Common myeloid progenitor, CD34-positive (primary cell): ENCODE measurements at regions of chr3 and their contacts with region 1.

Region 1: GRCh38 chr3:58532794-58533220 is 4.2 kb downstream of the ACOX2 start:
- DNase-seq: peak; percentile 76 to 84 (median 82)
- H3K4me3 ChIP-seq: no peak overlapping the region
- H3K27ac ChIP-seq: no peak overlapping the region
- H3K4me1 ChIP-seq: peaks cover 0 to 49% (median 42%) of the 10 kb centered on the region in 4 experiments
- H3K27me3 ChIP-seq: no peaks in the 10 kb centered on the region

Region 2: GRCh38 chr3:58305882-58306711 is 226.7 kb before region 1 on chr3 and contains the starts of genes HTD2 and RPP14:
- CTCF ChIA-PET with region 1: interaction called, 14 read pairs
- POLR2A ChIA-PET with region 1: interaction called, 3 read pairs
- DNase-seq: peak; percentile 98 to 100 (median 99)
- H3K4me3 ChIP-seq: peak within 1 kb of the TSS; percentile 66 to 97 (median 92)
- H3K27ac ChIP-seq: peak within 1 kb of the TSS; percentile 98 to 99
- H3K4me1 ChIP-seq: peaks cover 3 to 22% (median 19%) of the 10 kb centered on the region in 4 experiments
- H3K27me3 ChIP-seq: peaks cover 0 to 4% (median 0%) of the 10 kb centered on the region in 5 experiments

Region 3: GRCh38 chr3:58398669-58399333 is 134.0 kb before region 1 on chr3:
- CTCF ChIA-PET with region 1: no interaction called
- POLR2A ChIA-PET with region 1: no interaction called
- DNase-seq: no peak
- H3K4me3 ChIP-seq: no peak overlapping the region
- H3K27ac ChIP-seq: no peak overlapping the region
- H3K4me1 ChIP-seq: no peaks in the 10 kb centered on the region
- H3K27me3 ChIP-seq: no peaks in the 10 kb centered on the region

Region 4: DNA sequence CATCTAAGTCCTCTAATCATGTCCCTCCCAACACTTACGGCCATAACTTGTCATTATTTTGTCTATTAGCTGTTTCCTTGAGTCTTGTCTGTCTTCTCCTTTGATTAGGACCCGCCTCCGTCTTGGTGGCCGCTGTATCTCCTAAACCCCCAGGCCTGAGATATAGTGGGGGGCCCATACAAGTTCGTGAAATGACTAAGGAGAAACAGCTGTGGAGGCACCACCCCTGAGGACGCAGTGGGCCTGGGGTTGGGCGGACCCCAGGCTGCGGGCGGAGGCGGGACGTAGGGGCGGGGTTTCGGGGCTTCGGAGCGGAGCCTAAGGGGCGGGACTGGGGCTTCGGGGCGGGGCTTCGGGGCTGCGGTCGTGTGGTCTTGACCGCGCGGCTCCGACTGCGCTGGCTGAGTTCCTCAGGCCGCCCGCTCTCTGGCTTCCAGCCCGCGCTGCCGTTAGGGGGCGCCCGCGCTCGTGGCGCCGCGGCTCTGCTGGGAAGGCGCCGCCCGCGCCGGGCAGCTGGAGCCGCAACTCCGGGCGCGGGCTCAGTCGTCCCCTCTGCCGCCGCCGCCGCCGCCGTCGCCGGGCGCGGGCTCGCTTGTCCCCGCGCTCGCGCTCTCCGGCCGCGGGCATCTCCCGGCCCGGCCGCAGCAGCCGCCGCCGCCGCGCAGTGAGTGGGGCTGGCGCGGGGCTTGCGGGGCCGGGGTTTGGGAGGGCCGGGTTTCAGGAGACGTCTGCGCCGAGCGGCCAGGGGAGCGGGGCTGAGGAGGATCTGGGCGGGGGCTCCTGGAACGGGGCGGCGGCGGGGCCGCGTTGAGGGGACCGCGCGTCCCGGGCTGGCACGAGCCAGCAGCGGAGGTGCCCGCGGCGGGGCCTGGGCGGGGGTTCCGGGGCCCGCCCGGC is 41.1 kb before region 1 on chr3 and contains the start of gene KCTD6:
- CTCF ChIA-PET with region 1: interaction called, 50 read pairs
- POLR2A ChIA-PET with region 1: no interaction called
- DNase-seq: peak; percentile 94 to 97 (median 97)
- H3K4me3 ChIP-seq: peak within 1 kb of the TSS; percentile 65 to 95 (median 83)
- H3K27ac ChIP-seq: peak within 1 kb of the TSS in 1 of 2 experiments; percentile 59
- H3K4me1 ChIP-seq: peaks cover 6 to 22% (median 14%) of the 10 kb centered on the region in 4 experiments
- H3K27me3 ChIP-seq: peaks cover 0 to 2% (median 0%) of the 10 kb centered on the region in 5 experiments

Region 5: GRCh38 chr3:58520403-58521335 is 12.1 kb before region 1 on chr3:
- CTCF ChIA-PET with region 1: interaction called, 24 read pairs
- POLR2A ChIA-PET with region 1: interaction called, 3 read pairs
- DNase-seq: peak in 2 of 3 donors; percentile 15 to 17
- H3K4me3 ChIP-seq: no peak overlapping the region
- H3K27ac ChIP-seq: no peak overlapping the region
- H3K4me1 ChIP-seq: peaks cover 0 to 4% (median 0%) of the 10 kb centered on the region in 4 experiments
- H3K27me3 ChIP-seq: no peaks in the 10 kb centered on the region